Naive thymus-derived CD4-positive, alpha-beta T cell (primary cell): ENCODE measurements at regions of chr5 and their contacts with region 1.

Region 1: GRCh38 chr5:66144074-66144833 is at the start of gene SREK1:
- DNase-seq: peak; percentile 84 to 90 (median 89)
- ATAC-seq: peak; percentile 91
- H3K4me3 ChIP-seq: peak within 1 kb of the TSS; percentile 80
- H3K4me3 Mint-ChIP-seq: peak within 1 kb of the TSS; percentile 91 to 100 (median 98)
- H3K27ac ChIP-seq: peak within 1 kb of the TSS; percentile 98
- H3K27ac Mint-ChIP-seq: peak within 1 kb of the TSS; percentile 99 to 100 (median 100)
- H3K4me1 ChIP-seq: peaks cover 21 to 34% of the 10 kb centered on the region in 2 donors
- H3K4me1 Mint-ChIP-seq: peaks cover 22 to 60% (median 47%) of the 10 kb centered on the region in 7 donors
- H3K27me3 ChIP-seq: no peaks in the 10 kb centered on the region
- H3K27me3 Mint-ChIP-seq: no peaks in the 10 kb centered on the region
- total RNA-seq, gene SREK1: 68.2 to 143 (median 85.8) TPM

Region 2: DNA sequence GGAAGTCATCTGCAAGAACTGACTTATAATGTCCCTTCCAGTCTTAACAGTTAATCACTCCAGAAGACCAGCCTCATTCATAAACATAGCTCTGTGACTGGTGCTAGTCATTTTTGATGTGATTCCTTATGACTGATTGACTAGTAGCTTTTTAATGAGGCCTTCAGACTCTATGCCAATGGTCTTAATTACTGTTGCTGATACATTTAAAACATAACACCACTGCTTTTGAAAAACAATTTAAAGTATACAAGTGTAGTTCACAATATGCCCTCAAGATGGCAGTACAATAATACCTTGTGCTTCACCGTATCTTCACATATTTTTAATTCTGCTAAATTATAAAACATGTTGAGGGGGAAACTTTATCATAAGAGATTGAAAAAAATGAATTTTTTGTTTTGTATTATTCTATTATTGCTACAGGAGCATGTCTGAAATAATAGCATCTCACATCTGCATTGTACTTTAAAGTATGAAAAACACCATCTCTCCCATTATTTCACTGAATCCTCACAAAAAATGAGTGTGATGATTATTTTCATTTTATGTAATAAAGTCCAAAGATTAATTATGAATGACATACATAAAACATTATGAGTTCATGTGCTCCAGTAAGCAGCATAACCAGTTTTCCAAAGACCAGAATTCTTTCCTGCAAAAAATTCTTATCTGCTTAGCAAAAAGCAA is 1509.1 kb before region 1 on chr5:
- CTCF ChIA-PET with region 1: no interaction called
- POLR2A ChIA-PET with region 1: no interaction called
- intact Hi-C with region 1: loop called in 1 of 2 experiments (anchors 5 kb)
- DNase-seq: peak in 6 of 9 donors; percentile 2 to 41 (median 35)
- ATAC-seq: peak; percentile 60
- H3K4me3 ChIP-seq: no peak overlapping the region
- H3K4me3 Mint-ChIP-seq: no peak overlapping the region
- H3K27ac ChIP-seq: no peak overlapping the region
- H3K27ac Mint-ChIP-seq: no peak overlapping the region
- H3K4me1 ChIP-seq: no peaks in the 10 kb centered on the region
- H3K4me1 Mint-ChIP-seq: peaks cover 0 to 9% (median 0%) of the 10 kb centered on the region in 7 donors
- H3K27me3 ChIP-seq: peaks cover 0 to 3% of the 10 kb centered on the region in 2 donors
- H3K27me3 Mint-ChIP-seq: peaks cover 15 to 28% (median 21%) of the 10 kb centered on the region in 5 donors

Region 3: GRCh38 chr5:65035211-65036206 is 1108.7 kb before region 1 on chr5:
- CTCF ChIA-PET with region 1: no interaction called
- POLR2A ChIA-PET with region 1: no interaction called
- intact Hi-C with region 1: loop called in 1 of 2 experiments (anchors 2 kb)
- DNase-seq: peak; percentile 60 to 92 (median 85)
- ATAC-seq: peak; percentile 88
- H3K4me3 ChIP-seq: peak overlapping the region; percentile 78
- H3K4me3 Mint-ChIP-seq: peak overlapping the region; percentile 74 to 94 (median 82)
- H3K27ac ChIP-seq: peak overlapping the region; percentile 84
- H3K27ac Mint-ChIP-seq: peak overlapping the region; percentile 84 to 96 (median 90)
- H3K4me1 ChIP-seq: peaks cover 20% of the 10 kb centered on the region in 2 donors
- H3K4me1 Mint-ChIP-seq: peaks cover 3 to 36% (median 29%) of the 10 kb centered on the region in 7 donors
- H3K27me3 ChIP-seq: no peaks in the 10 kb centered on the region
- H3K27me3 Mint-ChIP-seq: no peaks in the 10 kb centered on the region

Region 4: DNA sequence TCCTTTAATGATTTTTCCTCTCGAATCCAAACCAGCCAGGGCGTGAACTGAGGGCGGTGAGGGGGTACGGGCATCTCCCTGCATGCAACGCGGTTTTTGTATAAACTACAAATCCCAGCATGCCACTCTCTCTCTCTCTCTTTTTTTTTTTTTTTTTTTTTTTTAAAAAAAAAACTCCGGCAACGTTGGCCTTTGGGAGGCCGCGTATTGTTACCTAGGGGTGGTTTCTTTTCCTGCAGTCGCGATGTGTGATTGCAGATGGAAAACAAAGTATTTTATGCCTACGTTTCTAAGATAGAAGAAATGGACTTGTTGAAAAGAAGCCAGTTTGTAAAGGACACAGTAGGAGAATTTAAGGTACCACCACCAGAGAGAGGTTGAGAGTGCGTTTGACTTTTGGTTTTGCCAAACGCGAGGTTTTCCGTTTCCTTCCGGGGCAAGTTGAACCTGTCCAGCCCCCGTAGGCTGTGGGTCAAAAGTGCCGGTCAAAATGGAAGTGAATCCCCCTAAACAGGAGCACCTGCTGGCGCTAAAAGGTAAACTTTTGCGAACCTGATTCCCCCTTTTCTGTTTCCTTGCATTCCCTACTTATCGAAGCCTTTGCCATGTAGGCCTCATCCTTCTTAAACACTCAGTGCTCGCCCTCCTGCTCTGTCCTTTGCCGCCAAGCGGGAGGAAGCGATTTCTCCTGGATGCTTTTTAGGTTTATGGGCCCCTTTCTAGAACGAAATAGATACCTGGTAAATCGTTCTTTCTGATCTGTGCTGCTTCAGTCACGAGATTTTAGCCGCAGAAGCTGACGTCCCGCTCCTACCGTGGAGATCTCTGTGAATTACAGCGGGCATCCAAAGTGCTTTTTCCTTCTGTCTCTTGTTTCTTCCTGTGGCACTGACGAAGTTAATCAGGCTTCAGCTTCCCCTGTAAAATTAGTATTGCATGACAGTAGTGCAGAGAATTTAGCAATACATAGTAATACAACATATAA is 519.4 kb before region 1 on chr5 and contains the starts of genes SHLD3 and TRAPPC13:
- CTCF ChIA-PET with region 1: no interaction called
- POLR2A ChIA-PET with region 1: interaction called, 5 read pairs
- intact Hi-C with region 1: loop called (anchors 1 kb)
- DNase-seq: peak; percentile 57 to 92 (median 91)
- ATAC-seq: peak; percentile 86
- H3K4me3 ChIP-seq: peak within 1 kb of the TSS; percentile 75
- H3K4me3 Mint-ChIP-seq: peak within 1 kb of the TSS; percentile 93 to 100 (median 98)
- H3K27ac ChIP-seq: peak within 1 kb of the TSS; percentile 92
- H3K27ac Mint-ChIP-seq: peak within 1 kb of the TSS; percentile 97 to 100 (median 98)
- H3K4me1 ChIP-seq: peaks cover 20% of the 10 kb centered on the region in 2 donors
- H3K4me1 Mint-ChIP-seq: peaks cover 14 to 73% (median 51%) of the 10 kb centered on the region in 7 donors
- H3K27me3 ChIP-seq: no peaks in the 10 kb centered on the region
- H3K27me3 Mint-ChIP-seq: peaks cover 0 to 3% (median 0%) of the 10 kb centered on the region in 5 donors
- total RNA-seq, gene SHLD3: 4.8 to 11.3 (median 5.8) TPM
- total RNA-seq, gene TRAPPC13: 18.2 to 23.1 (median 20.8) TPM

Region 5: DNA sequence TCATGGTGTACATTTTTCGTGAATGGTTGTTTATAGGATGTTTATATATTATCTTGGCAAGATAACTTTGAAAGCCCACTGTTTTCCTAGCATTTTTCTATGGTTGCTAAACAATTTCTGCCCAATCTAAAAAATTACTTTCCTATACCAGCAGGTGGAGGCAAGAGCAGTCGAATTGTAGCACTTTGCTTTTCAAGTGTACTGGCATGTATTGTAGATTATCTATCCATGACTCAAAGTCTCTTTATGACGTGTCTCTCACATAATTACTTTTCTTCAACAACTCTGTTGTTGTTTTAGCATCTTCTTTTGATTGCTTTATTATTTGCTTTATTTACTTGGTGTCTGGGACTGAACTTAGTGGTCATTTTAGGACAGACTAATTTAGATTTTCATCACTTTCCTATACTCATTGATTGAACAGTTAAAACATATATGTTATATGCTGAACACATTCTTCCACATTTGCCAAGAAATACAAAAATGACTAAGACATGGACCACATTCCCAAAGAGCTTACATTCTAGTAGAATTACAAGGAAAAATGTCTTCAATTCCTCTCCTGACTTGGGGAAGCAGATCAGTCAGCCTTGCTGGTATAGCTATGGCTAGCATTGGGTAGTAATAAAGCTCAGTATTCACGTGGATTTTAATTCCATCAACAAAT is 401.6 kb before region 1 on chr5:
- CTCF ChIA-PET with region 1: no interaction called
- POLR2A ChIA-PET with region 1: no interaction called
- intact Hi-C with region 1: loop called (anchors 5 kb)
- DNase-seq: peak in 6 of 9 donors; percentile 13 to 46 (median 27)
- ATAC-seq: peak; percentile 70
- H3K4me3 ChIP-seq: no peak overlapping the region
- H3K4me3 Mint-ChIP-seq: no peak overlapping the region
- H3K27ac ChIP-seq: no peak overlapping the region
- H3K27ac Mint-ChIP-seq: no peak overlapping the region
- H3K4me1 ChIP-seq: no peaks in the 10 kb centered on the region
- H3K4me1 Mint-ChIP-seq: peaks cover 0 to 9% (median 3%) of the 10 kb centered on the region in 7 donors
- H3K27me3 ChIP-seq: no peaks in the 10 kb centered on the region
- H3K27me3 Mint-ChIP-seq: no peaks in the 10 kb centered on the region

Region 6: GRCh38 chr5:65790371-65791163 is 353.7 kb before region 1 on chr5:
- CTCF ChIA-PET with region 1: no interaction called
- POLR2A ChIA-PET with region 1: no interaction called
- intact Hi-C with region 1: no loop called
- DNase-seq: no peak
- ATAC-seq: peak; percentile 84
- H3K4me3 ChIP-seq: no peak overlapping the region
- H3K4me3 Mint-ChIP-seq: no peak overlapping the region
- H3K27ac ChIP-seq: no peak overlapping the region
- H3K27ac Mint-ChIP-seq: peak overlapping the region in 3 of 9 donors; percentile 16 to 61 (median 41)
- H3K4me1 ChIP-seq: no peaks in the 10 kb centered on the region
- H3K4me1 Mint-ChIP-seq: peaks cover 0 to 13% (median 11%) of the 10 kb centered on the region in 7 donors
- H3K27me3 ChIP-seq: no peaks in the 10 kb centered on the region
- H3K27me3 Mint-ChIP-seq: no peaks in the 10 kb centered on the region

Region 7: GRCh38 chr5:65867542-65868200 is 276.6 kb before region 1 on chr5:
- CTCF ChIA-PET with region 1: no interaction called
- POLR2A ChIA-PET with region 1: no interaction called
- intact Hi-C with region 1: loop called in 1 of 2 experiments (anchors 2 kb)
- DNase-seq: peak in 6 of 9 donors; percentile 5 to 27 (median 12)
- ATAC-seq: no peak
- H3K4me3 ChIP-seq: peak overlapping the region; percentile 27
- H3K4me3 Mint-ChIP-seq: peak overlapping the region; percentile 61 to 84 (median 78)
- H3K27ac ChIP-seq: peak overlapping the region; percentile 69
- H3K27ac Mint-ChIP-seq: peak overlapping the region in 8 of 9 donors; percentile 82 to 99 (median 93)
- H3K4me1 ChIP-seq: peaks cover 0 to 16% of the 10 kb centered on the region in 2 donors
- H3K4me1 Mint-ChIP-seq: peaks cover 16 to 49% (median 30%) of the 10 kb centered on the region in 7 donors
- H3K27me3 ChIP-seq: no peaks in the 10 kb centered on the region
- H3K27me3 Mint-ChIP-seq: no peaks in the 10 kb centered on the region

Region 8: DNA sequence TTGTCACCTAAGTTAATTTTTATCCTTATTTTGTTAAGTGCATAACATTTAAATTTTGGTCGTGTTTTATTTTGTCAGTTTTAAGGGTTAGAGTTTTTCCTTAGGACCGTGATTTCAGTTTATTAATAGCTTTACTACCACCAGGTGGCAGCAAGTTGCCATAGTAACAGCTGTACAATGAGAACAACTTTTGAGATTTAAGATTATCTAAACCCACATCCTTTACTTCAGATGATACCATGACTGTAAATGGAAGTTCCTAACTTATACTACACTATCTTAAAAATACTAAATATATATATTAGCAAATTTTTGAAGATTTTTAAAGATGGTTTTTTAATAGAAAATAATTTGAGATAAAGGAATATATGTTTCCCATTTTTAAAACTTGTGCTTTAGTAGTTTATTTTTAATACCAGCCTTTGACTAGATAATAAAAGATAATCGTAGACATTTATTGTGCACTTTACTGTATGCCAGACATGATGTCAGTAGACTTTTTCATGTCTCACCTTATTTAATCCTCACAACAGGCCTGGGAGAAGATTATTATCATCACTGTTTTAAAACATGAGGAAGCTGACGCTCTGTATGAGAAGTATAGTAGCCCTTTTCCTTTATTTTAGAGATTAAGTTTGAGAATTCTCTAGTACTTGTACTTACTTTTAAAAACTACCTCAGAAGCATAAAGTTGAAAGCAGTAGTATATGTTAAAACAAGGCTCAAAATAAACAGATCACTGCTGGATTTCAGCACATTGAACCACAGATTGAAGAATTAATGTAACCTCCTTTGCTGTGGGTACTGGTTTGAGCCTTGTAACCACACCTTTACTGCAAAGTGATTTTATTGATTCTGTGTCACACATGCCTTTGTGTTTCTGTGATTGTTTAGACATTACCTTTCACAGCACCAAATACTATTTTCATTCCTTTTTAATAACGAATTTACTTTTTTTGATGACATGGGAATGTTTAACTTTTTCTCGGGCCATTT is 27.4 kb after region 1 on chr5:
- CTCF ChIA-PET with region 1: no interaction called
- POLR2A ChIA-PET with region 1: interaction called, 3 read pairs
- intact Hi-C with region 1: loop called (anchors 1 kb)
- DNase-seq: peak in 7 of 9 donors; percentile 69 to 85 (median 80)
- ATAC-seq: peak; percentile 89
- H3K4me3 ChIP-seq: no peak overlapping the region
- H3K4me3 Mint-ChIP-seq: peak overlapping the region in 6 of 10 donors; percentile 5 to 48 (median 38)
- H3K27ac ChIP-seq: peak overlapping the region; percentile 43
- H3K27ac Mint-ChIP-seq: peak overlapping the region; percentile 69 to 93 (median 90)
- H3K4me1 ChIP-seq: peaks cover 7 to 8% of the 10 kb centered on the region in 2 donors
- H3K4me1 Mint-ChIP-seq: peaks cover 9 to 39% (median 28%) of the 10 kb centered on the region in 7 donors
- H3K27me3 ChIP-seq: no peaks in the 10 kb centered on the region
- H3K27me3 Mint-ChIP-seq: no peaks in the 10 kb centered on the region